CD8-positive, alpha-beta T cell (primary cell): ENCODE measurements at regions of chr4 and their contacts with region 1.

Region 1: DNA sequence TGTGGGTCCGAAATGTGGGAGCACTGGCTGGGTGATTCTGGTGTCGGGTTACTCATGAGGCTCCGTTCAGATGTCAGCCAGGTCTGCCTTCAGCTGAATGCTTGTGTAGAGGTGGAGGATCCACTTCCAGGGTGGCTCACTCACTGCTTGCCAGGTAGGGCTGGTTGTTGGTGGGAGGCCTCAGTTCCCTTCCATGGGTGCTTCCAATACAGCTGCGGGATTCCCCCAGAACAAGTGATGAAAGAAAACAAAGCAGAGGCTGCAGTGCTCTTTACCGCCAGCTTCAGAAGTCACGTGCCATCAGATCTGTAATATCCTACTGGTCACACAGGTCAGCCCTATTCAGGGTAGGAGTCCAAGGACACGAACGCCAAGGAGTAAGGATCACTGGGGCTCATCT is 1.1 kb upstream of the SMIM43 start:
- DNase-seq: no peak
- ATAC-seq: no peak
- H3K4me3 ChIP-seq: no peak overlapping the region
- H3K4me3 Mint-ChIP-seq: no peak overlapping the region
- H3K27ac ChIP-seq: no peak overlapping the region
- H3K27ac Mint-ChIP-seq: no peak overlapping the region
- H3K4me1 ChIP-seq: no peaks in the 10 kb centered on the region
- H3K4me1 Mint-ChIP-seq: peaks cover 10% of the 10 kb centered on the region
- H3K27me3 ChIP-seq: peaks cover 4 to 7% of the 10 kb centered on the region in 2 experiments
- H3K27me3 Mint-ChIP-seq: peaks cover 38% of the 10 kb centered on the region
- CTCF ChIP-seq: no peak

Region 2: DNA sequence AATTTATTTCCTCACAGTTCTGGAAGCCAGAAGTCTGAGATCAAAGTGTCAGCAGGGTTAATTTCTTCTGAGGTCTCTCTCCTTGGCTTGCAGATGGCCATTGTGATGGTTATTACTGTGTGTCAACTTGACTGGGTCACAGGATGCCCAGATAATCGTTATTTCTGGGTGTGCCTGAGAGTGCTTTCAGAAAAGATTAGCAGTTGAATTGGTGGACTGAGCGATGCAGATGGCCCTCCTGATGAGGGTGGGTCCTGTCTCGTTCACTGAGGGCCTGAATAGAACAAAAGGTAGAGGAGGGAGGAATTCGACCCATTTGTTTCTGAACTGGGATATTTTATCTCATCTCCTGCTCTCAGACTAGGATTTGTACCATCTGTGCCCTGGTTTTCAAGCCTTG is 16.8 kb before region 1 on chr4:
- CTCF ChIA-PET with region 1: no interaction called
- POLR2A ChIA-PET with region 1: no interaction called
- intact Hi-C with region 1: no loop called
- DNase-seq: no peak
- ATAC-seq: no peak
- H3K4me3 ChIP-seq: no peak overlapping the region
- H3K4me3 Mint-ChIP-seq: no peak overlapping the region
- H3K27ac ChIP-seq: no peak overlapping the region
- H3K27ac Mint-ChIP-seq: no peak overlapping the region
- H3K4me1 ChIP-seq: no peaks in the 10 kb centered on the region
- H3K4me1 Mint-ChIP-seq: no peaks in the 10 kb centered on the region
- H3K27me3 ChIP-seq: peaks cover 0 to 3% of the 10 kb centered on the region in 2 experiments
- H3K27me3 Mint-ChIP-seq: peaks cover 27% of the 10 kb centered on the region
- CTCF ChIP-seq: no peak

Region 3: DNA sequence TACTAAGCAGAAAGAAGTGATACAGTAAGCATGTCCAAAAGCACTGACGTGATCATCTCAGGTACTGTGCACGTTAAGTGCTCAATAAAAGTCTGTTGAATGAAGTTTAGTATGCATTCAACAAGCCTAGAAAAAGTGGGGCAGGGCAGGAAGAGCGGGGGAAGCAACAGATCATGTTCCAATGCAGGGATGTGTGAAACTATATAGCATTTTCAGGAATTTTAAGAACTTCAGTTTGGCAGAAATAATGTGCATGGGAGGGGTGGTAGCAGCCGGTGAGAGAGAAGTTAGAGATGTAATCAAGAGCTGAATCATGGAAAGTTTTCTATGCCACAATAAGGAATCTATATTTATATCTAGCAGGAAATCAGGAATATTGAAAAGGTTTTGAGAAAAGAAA is 76.8 kb after region 1 on chr4:
- CTCF ChIA-PET with region 1: no interaction called
- POLR2A ChIA-PET with region 1: no interaction called
- intact Hi-C with region 1: loop called in 1 of 2 experiments (anchors 1 kb)
- DNase-seq: no peak
- ATAC-seq: no peak
- H3K4me3 ChIP-seq: no peak overlapping the region
- H3K4me3 Mint-ChIP-seq: no peak overlapping the region
- H3K27ac ChIP-seq: no peak overlapping the region
- H3K27ac Mint-ChIP-seq: no peak overlapping the region
- H3K4me1 ChIP-seq: no peaks in the 10 kb centered on the region
- H3K4me1 Mint-ChIP-seq: no peaks in the 10 kb centered on the region
- H3K27me3 ChIP-seq: no peaks in the 10 kb centered on the region
- H3K27me3 Mint-ChIP-seq: no peaks in the 10 kb centered on the region
- CTCF ChIP-seq: no peak